Mammary epithelial cell (primary cell): ENCODE measurements at regions of chr12 and their contacts with region 1.

Region 1: DNA sequence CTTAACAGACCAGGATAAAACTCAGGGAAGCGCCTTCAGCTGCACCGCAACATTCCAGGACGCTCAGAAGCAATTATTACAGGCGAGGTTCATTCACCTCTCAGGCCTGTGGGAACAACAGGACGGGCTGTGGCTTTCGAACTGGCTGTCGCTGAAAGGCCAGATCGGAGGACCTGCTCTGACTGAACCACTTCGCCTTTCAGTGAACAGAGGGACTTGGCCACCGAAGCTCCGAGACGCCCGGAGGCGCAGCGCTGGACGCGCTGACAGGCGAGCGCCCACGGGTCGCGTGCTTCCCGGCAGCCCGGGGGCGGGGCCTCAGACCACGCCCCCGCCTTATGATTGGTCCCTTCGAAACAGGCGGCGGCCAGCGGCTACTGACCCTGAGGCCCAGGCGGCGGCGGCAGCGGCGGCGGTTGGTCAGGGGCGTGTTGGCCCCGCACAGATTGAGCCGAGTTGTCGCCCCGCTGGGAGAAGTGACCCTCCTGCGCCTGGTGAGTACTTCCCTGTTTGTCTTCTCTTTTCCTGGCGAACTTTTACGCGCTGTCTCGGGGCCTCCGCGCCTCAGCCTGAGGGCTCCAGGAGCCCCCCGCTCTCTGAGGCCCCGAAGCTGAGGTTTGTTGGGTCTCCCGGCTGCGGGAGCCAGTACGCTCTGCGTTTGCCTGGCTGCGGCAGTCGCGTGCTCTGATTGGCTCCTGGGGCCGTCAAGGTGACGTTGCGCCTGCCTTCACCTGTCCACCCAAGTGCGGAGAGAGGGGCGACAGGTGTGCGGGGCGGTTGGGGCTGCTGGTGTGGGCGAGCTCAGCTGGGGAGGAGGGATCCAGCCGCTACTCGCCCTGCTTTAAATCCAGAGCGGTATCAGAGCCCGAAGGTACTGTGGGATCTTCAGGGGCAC is at the start of gene GAS2L3:
- DNase-seq: peak; percentile 82
- H3K4me3 ChIP-seq: peak within 1 kb of the TSS; percentile 71 to 92 (median 74)
- H3K27ac ChIP-seq: peak within 1 kb of the TSS; percentile 82
- H3K4me1 ChIP-seq: peaks cover 10% of the 10 kb centered on the region
- H3K27me3 ChIP-seq: no peaks in the 10 kb centered on the region
- CTCF ChIP-seq: no peak
- total RNA-seq, gene GAS2L3: 4.0 to 17.7 TPM

Region 2: DNA sequence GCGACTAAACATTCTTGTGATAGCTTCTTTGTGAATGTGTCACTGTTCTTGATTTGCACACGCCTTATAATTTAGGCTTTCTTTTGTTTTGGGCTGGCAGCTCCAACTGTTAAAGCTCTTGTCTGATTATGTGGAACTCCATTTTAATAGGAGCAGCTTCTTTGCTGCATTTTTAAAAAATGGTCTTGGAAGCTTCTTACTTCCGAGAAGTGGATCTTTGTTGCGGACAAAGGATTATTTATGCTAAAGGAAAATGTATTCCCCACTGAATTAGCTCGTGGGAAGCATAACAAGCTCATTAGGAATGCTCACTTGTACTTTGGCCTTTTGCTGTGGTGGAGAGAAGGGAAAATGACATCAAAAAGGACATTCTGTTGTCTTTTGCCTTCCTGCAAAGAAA is 20.0 kb after region 1 on chr12:
- CTCF ChIA-PET with region 1: no interaction called
- dilution Hi-C with region 1: no loop called
- in situ Hi-C with region 1: no loop called
- intact Hi-C with region 1: loop called (anchors 2 kb)
- DNase-seq: peak; percentile 25
- H3K4me3 ChIP-seq: peak overlapping the region; percentile 29 to 66 (median 54)
- H3K27ac ChIP-seq: peak overlapping the region; percentile 46
- H3K4me1 ChIP-seq: peaks cover 4% of the 10 kb centered on the region
- H3K27me3 ChIP-seq: no peaks in the 10 kb centered on the region
- CTCF ChIP-seq: no peak

Region 3: DNA sequence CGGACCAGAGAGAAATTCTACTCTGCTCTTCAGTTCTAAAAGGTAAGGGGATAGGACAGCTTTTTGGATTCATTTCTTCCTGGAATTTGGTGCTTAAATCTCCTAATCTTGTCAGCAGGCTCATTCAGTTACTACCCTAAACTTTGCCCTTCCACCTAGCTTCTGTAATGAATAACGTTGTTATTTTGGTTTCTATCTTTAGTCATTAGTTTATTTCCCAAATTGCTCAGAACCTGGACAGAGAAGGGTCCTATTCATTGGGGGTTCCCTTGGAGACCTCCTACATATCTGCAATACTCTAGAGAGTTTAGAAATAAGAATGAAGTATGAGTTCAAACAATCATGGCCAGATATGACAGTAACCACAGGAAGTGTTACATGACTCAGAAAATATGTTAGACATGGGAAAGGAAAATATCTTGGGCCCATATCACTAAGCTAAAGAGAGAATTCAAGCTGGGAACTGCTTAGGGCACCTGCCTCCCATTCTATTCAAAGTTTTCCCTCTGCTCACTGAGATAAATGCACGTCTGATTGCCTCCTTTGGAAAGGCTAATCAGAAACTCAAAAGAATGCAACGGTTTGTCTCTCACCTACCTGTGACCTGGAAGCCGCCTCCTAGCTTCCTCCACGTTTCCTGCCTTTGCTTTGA is 87.9 kb after region 1 on chr12:
- CTCF ChIA-PET with region 1: interaction called, 12 read pairs
- dilution Hi-C with region 1: no loop called
- in situ Hi-C with region 1: no loop called
- intact Hi-C with region 1: loop called (anchors 5 kb)
- DNase-seq: peak; percentile 38
- H3K4me3 ChIP-seq: no peak overlapping the region
- H3K27ac ChIP-seq: no peak overlapping the region
- H3K4me1 ChIP-seq: peaks cover 5% of the 10 kb centered on the region
- H3K27me3 ChIP-seq: no peaks in the 10 kb centered on the region
- CTCF ChIP-seq: no peak

Region 4: DNA sequence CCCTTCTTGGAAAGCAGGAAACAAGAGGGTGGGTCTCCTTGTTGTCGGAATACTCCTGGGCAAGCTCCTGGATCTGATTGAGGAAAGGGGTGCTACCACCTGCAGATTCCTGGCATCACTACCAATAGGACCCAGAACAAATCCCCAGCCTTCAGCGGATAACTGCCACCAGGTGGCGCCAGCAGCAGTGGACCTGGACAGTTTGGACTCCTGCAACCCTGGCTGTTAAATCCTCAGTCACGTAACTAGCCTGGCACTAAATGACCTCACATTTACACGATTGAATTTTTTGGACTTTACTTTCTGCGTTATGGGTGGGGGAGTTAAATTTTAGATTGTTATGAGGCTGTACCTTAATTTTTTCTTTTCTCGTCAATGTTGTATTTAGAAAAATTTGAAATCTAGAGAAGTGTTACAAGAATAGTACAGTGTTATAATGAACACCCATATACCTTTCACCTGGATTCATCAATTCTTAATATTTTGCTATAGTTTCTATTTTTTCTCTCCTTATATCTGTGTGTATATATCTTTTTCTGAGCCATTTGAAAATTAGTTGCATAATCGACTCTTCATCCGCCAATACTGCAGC is 95.5 kb after region 1 on chr12:
- CTCF ChIA-PET with region 1: no interaction called
- dilution Hi-C with region 1: no loop called
- in situ Hi-C with region 1: no loop called
- intact Hi-C with region 1: loop called (anchors 5 kb)
- DNase-seq: peak; percentile 56
- H3K4me3 ChIP-seq: no peak overlapping the region
- H3K27ac ChIP-seq: no peak overlapping the region
- H3K4me1 ChIP-seq: no peaks in the 10 kb centered on the region
- H3K27me3 ChIP-seq: no peaks in the 10 kb centered on the region
- CTCF ChIP-seq: peak; percentile 82 to 96

Region 5: GRCh38 chr12:100716945-100717732 is 143.6 kb after region 1 on chr12:
- CTCF ChIA-PET with region 1: no interaction called
- dilution Hi-C with region 1: no loop called
- in situ Hi-C with region 1: loop called in 1 of 2 experiments (anchors 25 kb)
- intact Hi-C with region 1: loop called (anchors 10 kb)
- DNase-seq: no peak
- H3K4me3 ChIP-seq: peak overlapping the region; percentile 38 to 53 (median 50)
- H3K27ac ChIP-seq: no peak overlapping the region
- H3K4me1 ChIP-seq: peaks cover 6% of the 10 kb centered on the region
- H3K27me3 ChIP-seq: peaks cover 12% of the 10 kb centered on the region
- CTCF ChIP-seq: no peak

Region 6: GRCh38 chr12:100858656-100859055 is 285.1 kb after region 1 on chr12:
- CTCF ChIA-PET with region 1: no interaction called
- dilution Hi-C with region 1: no loop called
- in situ Hi-C with region 1: no loop called
- intact Hi-C with region 1: no loop called
- DNase-seq: peak; percentile 50
- H3K4me3 ChIP-seq: no peak overlapping the region
- H3K27ac ChIP-seq: no peak overlapping the region
- H3K4me1 ChIP-seq: no peaks in the 10 kb centered on the region
- H3K27me3 ChIP-seq: no peaks in the 10 kb centered on the region
- CTCF ChIP-seq: no peak